ENCODE measurements at regions of chr1 and their contacts with region 1.

Region 1: GRCh38 chr1:155084722-155085503 is 6.3 kb downstream of the EFNA3 start:
- DNase-seq: peak; percentile 62
- H3K4me3 ChIP-seq: peak overlapping the region; percentile 80
- H3K27me3 ChIP-seq: peaks cover 32% of the 10 kb centered on the region
- CTCF ChIP-seq: peak; percentile 96

Region 2: DNA sequence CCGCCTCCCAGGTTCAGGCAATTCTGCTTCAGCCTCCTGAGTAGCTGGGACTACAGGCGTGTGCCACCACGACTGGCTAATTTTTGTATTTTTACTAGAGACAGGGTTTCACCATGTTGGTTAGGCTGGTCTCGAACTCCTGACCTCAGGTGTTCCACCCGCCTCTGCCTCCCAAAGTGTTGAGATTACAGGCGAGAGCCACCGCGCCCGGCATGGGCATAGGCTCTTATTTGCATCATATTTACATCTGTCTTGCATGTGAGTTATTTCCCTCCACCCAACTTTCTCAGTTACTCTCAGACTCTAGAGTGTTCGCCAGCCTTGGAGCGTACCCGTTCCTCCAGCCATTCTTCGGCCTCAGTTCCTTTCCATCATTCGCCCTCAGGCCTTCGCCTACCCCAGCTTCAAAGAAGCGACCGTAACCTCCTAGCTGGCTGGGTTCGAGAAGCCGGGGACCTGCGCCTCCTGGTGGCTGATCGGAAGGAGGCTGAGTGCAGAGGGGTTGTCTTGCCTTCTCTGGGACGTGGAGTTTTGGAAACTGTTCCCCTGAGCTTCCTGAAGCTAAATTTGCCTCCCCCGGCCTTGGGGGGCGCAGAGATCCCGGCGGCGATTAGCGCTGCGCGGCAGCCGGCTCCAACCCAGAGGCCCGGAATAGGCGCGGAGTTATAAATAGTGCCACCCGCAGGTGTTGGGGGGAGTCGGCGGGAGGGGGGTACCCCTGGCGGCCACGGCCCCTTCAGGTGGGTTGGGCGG is 85.9 kb before region 1 on chr1:
- CTCF ChIA-PET with region 1: no interaction called
- POLR2A ChIA-PET with region 1: no interaction called
- DNase-seq: no peak
- H3K4me3 ChIP-seq: peak overlapping the region; percentile 27
- H3K27me3 ChIP-seq: no peaks in the 10 kb centered on the region
- CTCF ChIP-seq: peak; percentile 96

Region 3: DNA sequence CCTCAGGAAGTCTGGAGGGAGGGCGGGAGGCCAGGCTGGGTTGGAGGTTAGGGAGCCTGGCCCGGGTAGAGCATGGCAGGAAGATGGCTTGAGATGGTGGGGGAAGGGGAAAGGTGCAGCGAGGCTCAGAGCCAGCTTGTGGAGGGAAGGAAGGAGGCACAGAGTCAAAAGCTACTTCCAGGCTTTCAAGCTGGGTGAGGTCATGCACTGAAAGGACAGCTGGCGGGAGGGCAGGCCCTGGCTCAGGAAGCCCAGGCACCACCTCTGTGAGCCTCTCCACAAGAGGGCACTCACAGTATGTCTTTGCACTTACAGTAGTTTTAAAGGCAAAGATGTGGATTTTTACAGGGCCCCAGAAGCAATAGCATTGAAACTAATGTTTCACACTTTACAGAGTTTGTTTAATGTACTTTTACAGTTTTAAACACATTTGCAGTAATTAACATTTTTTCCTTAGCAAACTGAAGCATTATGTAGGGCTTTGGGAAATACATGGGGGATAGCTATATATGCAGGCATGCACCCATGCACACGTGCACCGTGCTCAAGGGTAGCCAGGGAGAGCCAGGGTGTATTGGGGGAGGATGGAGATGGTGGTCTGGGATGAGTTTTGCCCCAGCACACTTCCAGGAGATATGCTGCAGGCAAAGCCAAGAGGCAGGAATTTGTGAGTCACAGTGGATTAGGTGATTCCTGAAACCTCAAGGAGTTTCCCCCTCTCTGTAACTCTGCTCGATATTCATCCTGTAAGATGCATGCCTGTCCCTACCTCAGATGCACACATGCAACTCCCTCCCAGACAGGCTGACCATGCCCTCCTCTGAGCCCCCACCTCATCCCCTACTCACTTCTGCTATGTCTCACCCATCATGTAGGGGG is 39.9 kb before region 1 on chr1:
- CTCF ChIA-PET with region 1: interaction called, 86 read pairs
- POLR2A ChIA-PET with region 1: no interaction called
- DNase-seq: no peak
- H3K4me3 ChIP-seq: no peak overlapping the region
- H3K27me3 ChIP-seq: no peaks in the 10 kb centered on the region; the same call in 1 of the 2 replicates
- CTCF ChIP-seq: peak; percentile 83

Region 4: GRCh38 chr1:155063550-155064110 is 21.3 kb before region 1 on chr1 and contains the start of gene EFNA4:
- CTCF ChIA-PET with region 1: interaction called, 147 read pairs
- POLR2A ChIA-PET with region 1: no interaction called
- DNase-seq: no peak
- H3K4me3 ChIP-seq: peak within 1 kb of the TSS; percentile 78
- H3K27me3 ChIP-seq: no peaks in the 10 kb centered on the region
- CTCF ChIP-seq: no peak
- polyA plus RNA-seq, gene EFNA4: 6.6 and 12.4 TPM in 2 replicates

Region 5: DNA sequence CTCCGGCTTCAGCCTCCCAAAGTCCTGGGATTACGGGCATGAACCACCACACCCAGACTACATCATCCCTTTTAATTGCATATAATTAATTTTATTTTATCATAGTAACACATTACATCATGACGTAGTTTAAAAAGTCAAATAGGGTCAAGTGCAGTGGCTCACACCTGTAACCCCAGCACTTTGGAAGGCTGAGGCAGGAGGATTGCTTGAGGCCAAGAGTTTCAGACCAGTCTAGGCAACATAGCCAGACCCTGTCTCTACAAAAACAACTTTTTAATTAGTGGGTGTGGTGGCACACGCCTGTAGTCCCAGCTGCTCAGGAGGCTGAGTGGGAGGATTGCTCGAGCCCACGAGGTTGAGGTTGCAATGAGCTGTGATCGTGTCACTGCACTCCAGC is 14.4 kb after region 1 on chr1:
- CTCF ChIA-PET with region 1: interaction called, 10 read pairs
- POLR2A ChIA-PET with region 1: no interaction called
- DNase-seq: no peak
- H3K4me3 ChIP-seq: no peak overlapping the region
- H3K27me3 ChIP-seq: peaks cover 4% of the 10 kb centered on the region; the same call in 1 of the 2 replicates
- CTCF ChIP-seq: no peak

Region 6: GRCh38 chr1:155135415-155136028 is 50.6 kb after region 1 on chr1 and contains the start of gene SLC50A1:
- CTCF ChIA-PET with region 1: interaction called, 11 read pairs
- POLR2A ChIA-PET with region 1: no interaction called
- DNase-seq: peak; percentile 73
- H3K4me3 ChIP-seq: peak within 1 kb of the TSS; percentile 82
- H3K27me3 ChIP-seq: no peaks in the 10 kb centered on the region
- CTCF ChIP-seq: no peak
- polyA plus RNA-seq, gene SLC50A1: 39.5 and 47.4 TPM in 2 replicates

Region 7: DNA sequence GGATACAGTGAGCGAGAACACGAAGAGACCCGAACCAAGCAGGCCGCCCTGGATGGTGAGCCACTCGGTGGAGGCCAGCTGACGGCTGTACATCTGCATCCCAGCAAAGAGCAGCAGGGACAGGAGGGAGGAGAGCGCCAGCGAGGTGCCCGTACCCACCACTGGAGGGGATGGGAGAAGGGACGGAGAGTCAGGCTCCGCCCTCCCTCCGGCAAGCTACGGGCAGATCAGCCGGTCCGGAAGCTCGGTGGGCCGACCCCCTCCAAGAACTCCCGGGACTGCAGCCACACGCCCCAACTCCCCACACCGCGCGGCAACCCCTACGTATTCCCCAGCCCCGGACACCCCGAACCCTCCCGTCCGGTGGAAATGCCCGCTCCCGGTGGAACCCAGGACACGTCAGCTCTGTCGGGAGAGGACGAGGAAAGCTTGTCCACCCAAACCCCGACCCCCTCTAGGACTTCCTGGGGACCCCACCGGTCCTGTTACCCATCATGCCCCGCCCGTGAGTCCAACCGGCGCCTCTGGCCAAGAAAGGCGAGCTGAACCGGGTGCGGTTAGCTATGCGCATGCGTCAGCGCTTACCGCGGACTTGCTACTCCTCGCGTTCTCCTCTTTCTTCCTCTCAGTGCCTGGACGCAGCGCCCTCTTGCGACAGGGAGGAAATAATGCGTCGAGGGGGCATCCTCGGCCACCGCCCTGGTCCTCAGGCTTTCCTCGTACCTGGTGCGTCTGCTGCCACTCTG is 88.0 kb after region 1 on chr1 and contains the start of gene KRTCAP2:
- CTCF ChIA-PET with region 1: interaction called, 259 read pairs
- POLR2A ChIA-PET with region 1: no interaction called
- DNase-seq: peak; percentile 73
- H3K4me3 ChIP-seq: peak within 1 kb of the TSS; percentile 97
- H3K27me3 ChIP-seq: no peaks in the 10 kb centered on the region
- CTCF ChIP-seq: peak; percentile 98
- polyA plus RNA-seq, gene KRTCAP2: 211 and 225 TPM in 2 replicates